Gastrocnemius medialis (tissue), 4 donors: ENCODE measurements at regions of chr12 and their contacts with region 1.

Region 1: GRCh38 chr12:110896559-110896958 is 23.8 kb downstream of the MYL2 start:
- DNase-seq: no peak
- ATAC-seq: no peak
- H3K4me3 ChIP-seq: no peak overlapping the region
- H3K27ac ChIP-seq: no peak overlapping the region
- H3K4me1 ChIP-seq: peaks cover 0 to 6% of the 10 kb centered on the region in 2 donors
- H3K27me3 ChIP-seq: no peaks in the 10 kb centered on the region
- CTCF ChIP-seq: no peak
- POLR2A ChIP-seq: no peak

Region 2: DNA sequence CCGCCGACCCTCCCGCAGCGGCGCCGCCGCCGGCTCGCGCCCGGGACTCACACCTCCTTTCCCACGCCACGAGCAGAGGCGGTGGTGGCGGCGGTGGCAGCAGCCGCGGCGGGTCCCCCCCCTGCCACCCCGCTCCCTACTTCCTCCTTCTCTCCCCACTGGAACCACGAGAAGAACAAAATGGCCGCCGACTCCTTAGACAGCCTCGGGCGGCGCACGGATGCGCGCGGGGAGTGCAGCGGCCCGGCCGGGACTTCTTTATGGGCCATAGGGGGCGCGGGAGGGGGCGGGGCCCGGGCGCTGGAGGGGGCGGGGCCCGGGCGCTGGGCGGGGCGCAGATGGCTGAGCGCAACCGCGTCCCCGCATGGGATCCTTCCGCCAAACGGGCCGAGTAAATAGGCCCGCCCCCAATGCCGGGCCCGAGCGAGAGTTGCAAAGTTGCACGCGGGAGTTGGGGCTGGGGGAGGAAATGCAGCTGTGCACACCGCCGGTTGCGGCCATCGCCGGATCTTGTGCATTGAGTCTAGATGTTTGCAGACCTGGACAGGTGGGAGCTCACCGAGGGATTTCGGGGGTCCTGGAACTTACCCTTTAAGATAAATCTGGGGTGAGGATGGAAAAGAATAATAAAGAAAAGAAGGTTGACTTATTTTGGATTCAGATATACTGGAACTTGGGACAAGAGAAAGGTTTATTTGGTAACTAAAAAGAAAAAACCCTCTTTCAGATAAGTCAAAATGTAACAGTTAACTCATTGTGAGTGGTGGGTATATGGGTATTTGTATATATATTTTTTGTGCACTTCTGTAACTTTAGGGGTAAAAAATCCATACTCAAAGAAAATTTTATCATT is 153.6 kb before region 1 on chr12 and contains the start of gene PPP1CC:
- in situ Hi-C with region 1: no loop called
- intact Hi-C with region 1: loop called (anchors 5 kb)
- DNase-seq: peak; percentile 89 to 92
- ATAC-seq: peak; percentile 88 to 89
- H3K4me3 ChIP-seq: peak within 1 kb of the TSS; percentile 92 to 100 (median 95)
- H3K27ac ChIP-seq: peak within 1 kb of the TSS; percentile 86 to 98 (median 94)
- H3K4me1 ChIP-seq: peaks cover 48% of the 10 kb centered on the region in 2 donors
- H3K27me3 ChIP-seq: no peaks in the 10 kb centered on the region
- CTCF ChIP-seq: peak in 1 of 5 experiments; percentile 23
- POLR2A ChIP-seq: peak; percentile 80 to 81
- total RNA-seq, gene PPP1CC: 96.4 to 226 (median 154) TPM

Region 3: GRCh38 chr12:110937104-110937641 is 40.6 kb after region 1 on chr12:
- in situ Hi-C with region 1: no loop called
- intact Hi-C with region 1: loop called (anchors 2 kb)
- DNase-seq: peak in 1 of 2 donors; percentile 45
- ATAC-seq: peak; percentile 41 to 48
- H3K4me3 ChIP-seq: peak overlapping the region in 3 of 4 donors; percentile 17 to 33 (median 18)
- H3K27ac ChIP-seq: peak overlapping the region in 3 of 4 donors; percentile 49 to 82 (median 78)
- H3K4me1 ChIP-seq: peaks cover 7 to 20% of the 10 kb centered on the region in 2 donors
- H3K27me3 ChIP-seq: no peaks in the 10 kb centered on the region
- CTCF ChIP-seq: peak; percentile 75 to 92 (median 85)
- POLR2A ChIP-seq: no peak

Region 4: GRCh38 chr12:111033281-111034082 is 136.9 kb after region 1 on chr12:
- in situ Hi-C with region 1: no loop called
- intact Hi-C with region 1: loop called (anchors 10 kb)
- DNase-seq: no peak
- ATAC-seq: no peak
- H3K4me3 ChIP-seq: peak overlapping the region in 3 of 4 donors; percentile 31 to 39 (median 37)
- H3K27ac ChIP-seq: no peak overlapping the region
- H3K4me1 ChIP-seq: peaks cover 5% of the 10 kb centered on the region in 2 donors
- H3K27me3 ChIP-seq: peaks cover 59 to 77% (median 59%) of the 10 kb centered on the region in 3 donors
- CTCF ChIP-seq: no peak
- POLR2A ChIP-seq: no peak

Region 5: DNA sequence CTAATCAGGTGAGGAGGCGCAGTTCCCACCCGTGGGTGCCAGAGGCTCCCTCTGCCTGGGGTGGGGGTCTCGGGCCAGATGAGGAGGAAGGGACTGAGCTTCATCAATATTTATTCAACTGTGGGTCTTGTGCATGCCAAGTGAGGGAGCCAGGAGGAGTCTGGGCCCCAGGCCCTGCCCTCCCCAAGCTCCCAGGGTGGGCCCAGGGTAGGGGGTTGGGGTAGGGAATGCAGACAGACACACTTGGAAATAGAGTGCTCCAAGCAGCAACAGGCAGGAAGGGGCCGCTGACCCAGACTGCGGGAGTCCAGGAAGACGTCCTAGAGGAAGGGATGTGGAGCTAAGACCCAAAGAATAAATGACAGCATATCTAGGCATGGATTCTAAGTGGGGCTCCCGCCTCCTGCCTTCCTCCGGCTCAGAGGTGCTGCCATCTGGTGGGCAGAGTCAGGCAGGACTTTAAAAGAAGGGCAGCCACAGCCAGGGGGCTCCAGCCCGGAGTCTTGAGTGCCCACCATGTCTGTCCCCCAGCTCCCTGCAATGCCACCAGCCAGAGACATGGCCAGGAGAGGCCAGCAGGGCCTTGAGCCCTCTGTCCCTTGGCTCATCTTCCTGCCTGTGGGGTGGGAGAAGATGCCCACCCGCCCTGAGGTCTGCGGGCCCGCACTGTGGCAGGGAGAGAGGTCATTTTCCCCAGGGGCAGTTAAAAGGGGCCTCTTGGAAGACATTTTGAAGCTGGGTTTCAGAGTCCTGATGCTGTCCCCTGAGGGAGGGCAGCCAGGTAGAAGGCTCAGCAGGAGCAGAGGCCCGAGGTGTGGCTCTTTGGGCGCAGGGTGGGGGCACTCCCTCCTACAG is 402.2 kb after region 1 on chr12:
- in situ Hi-C with region 1: loop called in 1 of 4 experiments (anchors 25 kb)
- intact Hi-C with region 1: loop called (anchors 5 kb)
- DNase-seq: peak in 1 of 2 donors; percentile 14
- ATAC-seq: peak in 1 of 2 donors; percentile 53
- H3K4me3 ChIP-seq: no peak overlapping the region
- H3K27ac ChIP-seq: no peak overlapping the region
- H3K4me1 ChIP-seq: no peaks in the 10 kb centered on the region
- H3K27me3 ChIP-seq: no peaks in the 10 kb centered on the region
- CTCF ChIP-seq: peak; percentile 43 to 75 (median 60)
- POLR2A ChIP-seq: no peak

Region 6: GRCh38 chr12:111313833-111314259 is 417.3 kb after region 1 on chr12:
- in situ Hi-C with region 1: loop called in 3 of 4 experiments (anchors 10 to 25 kb)
- intact Hi-C with region 1: loop called (anchors 2 kb)
- DNase-seq: peak; percentile 50 to 52
- ATAC-seq: peak; percentile 64 to 80
- H3K4me3 ChIP-seq: peak overlapping the region in 1 of 4 donors; percentile 1
- H3K27ac ChIP-seq: no peak overlapping the region
- H3K4me1 ChIP-seq: no peaks in the 10 kb centered on the region
- H3K27me3 ChIP-seq: peaks cover 2 to 8% (median 5%) of the 10 kb centered on the region in 3 donors
- CTCF ChIP-seq: peak; percentile 36 to 91 (median 85)
- POLR2A ChIP-seq: no peak